PC-3 (cell line): ENCODE measurements at regions of chr14 and their contacts with region 1.

Region 1: DNA sequence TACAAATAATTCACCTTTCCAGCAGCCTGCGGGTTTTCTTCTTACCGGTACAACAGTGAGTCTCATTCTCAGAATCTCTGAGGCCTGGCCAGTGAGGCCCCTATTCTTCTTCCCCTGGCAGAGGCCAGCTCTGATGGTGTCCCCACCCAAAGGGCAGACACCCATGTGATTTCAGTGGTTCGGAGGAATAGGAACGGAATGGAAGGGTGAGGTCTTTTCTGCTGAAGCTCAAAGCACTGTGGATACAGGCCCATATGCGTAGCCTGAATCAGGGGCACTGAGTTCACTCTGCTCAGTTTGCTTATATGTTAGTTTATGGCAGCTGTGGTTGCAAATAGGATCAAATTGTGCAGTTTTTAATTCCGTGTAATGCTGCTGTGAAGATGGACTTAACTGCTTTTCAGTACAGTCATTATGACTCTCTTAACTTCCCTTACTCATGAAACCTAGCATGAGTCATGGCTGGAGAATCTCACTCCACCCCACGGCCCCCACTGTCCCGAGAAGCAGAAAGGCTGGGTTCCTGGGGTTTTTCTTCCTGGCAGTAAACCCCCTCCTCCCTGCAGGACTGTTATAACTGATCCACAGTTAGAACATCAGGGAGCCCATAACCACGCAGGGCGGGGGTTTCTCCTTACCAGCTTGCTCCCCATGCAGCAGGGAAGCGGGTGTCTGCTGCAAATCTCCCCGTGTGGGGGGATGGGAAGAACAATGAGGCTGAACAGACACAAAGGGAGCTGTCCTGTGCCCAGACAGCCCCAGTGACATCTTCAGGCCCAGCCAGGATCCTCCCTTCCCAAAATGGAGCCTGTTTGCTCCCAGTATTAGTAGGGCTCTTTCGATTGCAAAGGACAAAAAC is 122.7 kb downstream of the SLC38A6 start:
- DNase-seq: peak; percentile 99
- ATAC-seq: peak; percentile 86
- H3K4me3 ChIP-seq: peak overlapping the region; percentile 17; the same call in 1 of the 2 replicates
- H3K27ac ChIP-seq: peak overlapping the region; percentile 96
- H3K4me1 ChIP-seq: peaks cover 45% of the 10 kb centered on the region
- H3K27me3 ChIP-seq: no peaks in the 10 kb centered on the region
- CTCF ChIP-seq: no peak

Region 2: DNA sequence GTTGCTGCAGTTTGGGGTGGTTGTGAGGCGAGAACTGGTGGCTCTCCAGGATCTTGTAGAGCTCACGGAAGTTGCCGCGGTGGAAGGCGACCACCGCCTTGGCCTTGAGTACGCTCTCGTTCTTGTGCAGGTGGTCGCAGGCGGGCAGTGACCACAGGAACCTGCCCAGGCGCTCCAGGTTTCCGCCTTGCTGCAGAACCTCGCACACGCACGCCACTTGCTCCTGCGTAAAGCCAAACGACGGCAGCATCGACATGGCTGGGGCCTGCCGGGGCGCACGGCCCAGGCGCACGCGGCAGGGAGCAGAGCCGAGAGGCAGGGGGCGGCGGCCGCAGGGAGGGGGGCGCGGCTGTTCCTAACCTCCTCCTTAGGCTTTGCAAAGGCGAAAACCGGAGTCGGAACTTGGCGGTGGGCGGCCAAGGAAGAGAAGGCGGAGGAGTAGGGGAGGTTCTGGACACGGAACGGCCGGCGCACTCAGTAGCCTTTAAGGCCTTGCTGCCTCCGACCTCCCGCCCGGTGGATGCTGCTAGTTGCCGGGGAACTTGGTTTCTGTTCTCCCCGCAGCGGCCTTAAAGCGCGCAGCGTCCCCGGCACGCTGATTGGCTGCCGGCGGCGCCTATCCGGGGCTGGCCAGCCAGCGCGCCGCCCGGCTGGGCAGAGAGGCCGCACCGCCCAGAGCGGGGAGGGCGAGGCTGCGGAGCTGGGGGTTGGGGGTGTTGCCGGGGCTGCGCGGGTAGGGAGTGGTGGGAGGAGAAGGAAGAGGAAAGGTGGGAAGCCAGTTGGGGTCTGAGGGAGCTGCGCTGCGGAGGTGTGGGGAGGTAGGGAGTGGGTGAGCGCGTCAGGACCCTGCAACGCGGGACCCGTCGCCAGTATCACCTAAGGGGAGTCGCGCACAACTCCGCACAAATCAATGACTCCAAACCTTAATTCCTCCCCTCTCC is 454.5 kb before region 1 on chr14 and contains the start of gene SIX1:
- CTCF ChIA-PET with region 1: no interaction called
- POLR2A ChIA-PET with region 1: no interaction called
- intact Hi-C with region 1: loop called (anchors 2 kb)
- DNase-seq: peak; percentile 97
- ATAC-seq: peak; percentile 78
- H3K4me3 ChIP-seq: peak within 1 kb of the TSS; percentile 75
- H3K27ac ChIP-seq: 0 out of 2 replicates have a peak within 1 kb of the TSS, but pooled peaks have one; percentile 6
- H3K4me1 ChIP-seq: peaks cover 21% of the 10 kb centered on the region
- H3K27me3 ChIP-seq: no peaks in the 10 kb centered on the region
- CTCF ChIP-seq: no peak
- total RNA-seq, gene SIX1: 16.5 and 18.2 TPM in 2 replicates

Region 3: DNA sequence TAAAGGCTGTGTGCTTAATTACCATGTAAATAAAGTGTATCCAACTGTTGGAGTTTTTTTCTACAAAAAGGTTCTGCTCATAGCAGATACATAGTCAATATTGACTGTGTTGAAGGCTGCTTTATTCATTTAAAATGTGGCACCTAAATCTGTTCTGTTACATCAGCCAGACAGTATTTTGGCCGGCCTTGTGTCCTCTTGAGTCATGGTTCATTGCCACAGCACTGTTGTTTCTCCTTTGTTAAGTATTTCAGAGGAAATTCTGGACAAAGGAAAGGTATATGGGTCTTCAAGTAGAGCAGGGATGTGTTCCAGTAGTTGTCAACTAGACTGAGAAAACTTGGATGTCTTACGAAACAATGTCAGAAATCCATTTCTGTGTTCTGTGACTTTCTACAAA is 27.2 kb before region 1 on chr14:
- CTCF ChIA-PET with region 1: interaction called, 3 read pairs
- POLR2A ChIA-PET with region 1: interaction called, 10 read pairs
- intact Hi-C with region 1: loop called (anchors 1 kb)
- DNase-seq: no peak
- ATAC-seq: peak; percentile 4; the same call in 1 of the 2 replicates
- H3K4me3 ChIP-seq: no peak overlapping the region
- H3K27ac ChIP-seq: peak overlapping the region; percentile 82
- H3K4me1 ChIP-seq: peaks cover 33% of the 10 kb centered on the region
- H3K27me3 ChIP-seq: no peaks in the 10 kb centered on the region
- CTCF ChIP-seq: no peak

Region 4: DNA sequence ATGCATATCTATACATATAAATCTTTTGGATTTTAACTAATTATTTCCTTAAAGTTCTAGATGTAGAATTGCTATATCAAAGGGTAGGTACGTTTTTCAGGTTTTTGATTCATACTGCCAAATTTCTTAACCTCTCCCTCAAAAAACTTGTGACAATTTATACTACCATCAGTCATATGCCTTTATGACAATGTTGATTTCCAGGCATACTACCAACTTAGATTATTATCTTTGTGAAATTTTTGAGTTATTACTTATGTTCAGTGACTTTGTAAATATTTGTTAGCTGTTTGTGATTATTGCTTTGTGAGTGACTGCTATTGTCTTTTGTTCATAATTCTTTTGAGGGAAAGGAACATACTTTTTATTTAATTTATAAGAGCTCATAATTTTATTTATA is 15.6 kb before region 1 on chr14:
- CTCF ChIA-PET with region 1: no interaction called
- POLR2A ChIA-PET with region 1: no interaction called
- intact Hi-C with region 1: loop called (anchors 1 kb)
- DNase-seq: peak; percentile 79
- ATAC-seq: peak; percentile 75
- H3K4me3 ChIP-seq: no peak overlapping the region
- H3K27ac ChIP-seq: peak overlapping the region; percentile 51
- H3K4me1 ChIP-seq: peaks cover 26% of the 10 kb centered on the region
- H3K27me3 ChIP-seq: no peaks in the 10 kb centered on the region
- CTCF ChIP-seq: no peak

Region 5: GRCh38 chr14:61178226-61179060 is 74.7 kb after region 1 on chr14:
- CTCF ChIA-PET with region 1: interaction called, 3 read pairs
- POLR2A ChIA-PET with region 1: interaction called, 10 read pairs
- intact Hi-C with region 1: loop called (anchors 1 kb)
- DNase-seq: peak; percentile 99
- ATAC-seq: peak; percentile 91
- H3K4me3 ChIP-seq: peak overlapping the region; percentile 20; the same call in 1 of the 2 replicates
- H3K27ac ChIP-seq: peak overlapping the region; percentile 93
- H3K4me1 ChIP-seq: peaks cover 39% of the 10 kb centered on the region
- H3K27me3 ChIP-seq: no peaks in the 10 kb centered on the region
- CTCF ChIP-seq: no peak

Region 6: DNA sequence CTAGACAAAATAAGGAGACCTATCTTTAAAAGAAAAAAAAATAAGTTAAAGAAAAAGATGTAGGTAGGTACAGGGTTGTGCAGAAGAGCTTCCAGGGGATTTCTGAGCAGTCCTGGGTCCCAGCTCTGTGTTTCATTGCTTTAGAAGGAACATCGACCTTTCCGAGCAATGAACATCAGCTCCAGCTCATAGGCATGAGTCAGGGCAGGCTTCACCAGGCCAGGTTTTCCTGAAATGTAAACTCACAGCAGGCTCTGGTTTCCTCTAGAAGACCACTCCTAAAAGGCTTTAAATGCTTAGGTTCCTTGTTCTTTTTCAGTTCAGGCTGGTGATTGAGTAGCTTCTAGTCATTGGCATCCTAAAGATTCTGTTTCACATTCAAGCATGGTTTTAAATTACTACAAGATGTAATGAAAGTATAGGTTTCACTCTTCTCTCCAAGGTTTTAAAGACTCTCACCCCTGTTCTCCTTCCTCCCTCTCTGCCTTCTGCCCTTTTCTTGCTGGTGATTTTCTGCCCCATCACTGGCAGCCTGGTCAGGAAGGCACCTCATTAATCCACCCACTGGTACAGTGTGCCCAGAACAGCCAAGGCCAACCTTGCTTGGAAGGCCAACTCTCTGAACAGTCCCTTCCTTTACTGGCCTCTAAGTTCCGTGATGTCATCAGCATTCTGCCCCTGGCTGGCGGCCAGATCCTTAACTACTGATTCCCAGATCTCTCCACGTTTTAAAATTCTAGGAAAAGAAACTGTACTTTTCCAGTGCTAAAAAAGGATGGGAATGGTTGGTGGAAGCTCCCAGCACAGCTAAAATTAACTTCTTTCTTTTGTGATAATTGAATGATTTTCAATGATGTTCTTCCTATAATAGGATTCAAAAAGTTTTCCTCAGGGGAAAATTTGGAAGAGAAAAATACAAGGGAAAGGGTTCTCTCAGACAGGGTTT is 482.2 kb after region 1 on chr14:
- CTCF ChIA-PET with region 1: no interaction called
- POLR2A ChIA-PET with region 1: no interaction called
- intact Hi-C with region 1: no loop called
- DNase-seq: peak; percentile 79
- ATAC-seq: peak; percentile 62
- H3K4me3 ChIP-seq: peak overlapping the region; percentile 9; the same call in 1 of the 2 replicates
- H3K27ac ChIP-seq: peak overlapping the region; percentile 93
- H3K4me1 ChIP-seq: peaks cover 34% of the 10 kb centered on the region
- H3K27me3 ChIP-seq: no peaks in the 10 kb centered on the region
- CTCF ChIP-seq: no peak